ENCODE measurements at regions of chr12 and their contacts with region 1.

Region 1: DNA sequence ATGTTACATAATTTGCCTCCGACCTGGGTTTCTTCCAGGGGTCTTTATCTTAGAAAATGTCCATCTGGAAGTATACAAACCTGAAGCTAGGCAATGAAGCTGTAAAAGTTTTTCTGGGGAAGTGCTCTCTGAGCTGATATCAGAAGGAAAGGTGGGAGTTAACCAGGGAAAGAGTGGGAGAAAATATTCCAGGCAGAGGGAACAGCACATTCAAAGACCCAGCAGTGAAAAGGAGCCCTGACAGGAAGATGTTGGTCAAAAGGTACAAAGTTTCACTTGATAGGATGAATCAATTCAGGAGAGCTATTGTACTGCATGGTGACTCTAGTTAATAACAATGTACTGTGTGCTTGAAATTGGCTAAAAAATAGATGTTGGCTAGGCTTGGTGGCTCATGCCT is 17.8 kb upstream of the CIT start:
- DNase-seq: no peak
- ATAC-seq: no peak

Region 2: GRCh38 chr12:119780786-119781434 is 114.0 kb before region 1 on chr12:
- intact Hi-C with region 1: loop called (anchors 5 kb)
- DNase-seq: peak; percentile 70
- ATAC-seq: no peak